HepG2 (cell line): ENCODE measurements at regions of chr1 and their contacts with region 1.

Region 1: DNA sequence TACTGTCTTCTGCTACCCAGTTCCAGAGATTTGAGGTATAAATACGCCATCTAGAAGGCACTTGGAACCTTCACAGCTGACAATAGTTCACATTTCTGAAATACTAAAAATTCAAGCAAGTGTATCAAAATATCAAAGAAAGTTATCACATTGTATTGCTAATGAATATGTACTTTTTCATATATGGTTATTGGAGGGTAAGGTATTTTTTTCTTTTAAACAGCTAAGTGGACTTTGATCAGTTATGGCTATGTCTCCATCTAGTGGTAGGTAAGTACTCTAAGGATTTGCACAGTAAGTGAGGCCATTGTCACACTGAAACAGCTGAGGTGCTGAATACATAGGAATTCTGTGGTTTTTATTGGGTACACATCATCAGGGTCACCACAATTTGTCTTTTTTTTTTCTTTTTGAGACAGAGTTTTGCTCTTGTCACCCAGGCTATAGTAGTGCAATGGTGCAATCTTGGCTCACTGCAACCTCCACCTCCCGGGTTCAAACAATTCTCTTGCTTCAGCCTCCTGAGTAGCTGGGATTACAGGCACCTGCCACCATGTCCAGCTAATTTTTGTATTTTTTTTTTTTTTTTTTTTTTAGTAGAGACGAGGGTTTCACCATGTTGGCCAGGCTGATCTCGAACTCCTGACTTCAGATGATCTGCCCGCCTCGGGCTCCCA is 49.1 kb upstream of the CR2 start:
- DNase-seq: peak; percentile 81
- ATAC-seq: peak; percentile 90
- H3K4me3 ChIP-seq: no peak overlapping the region
- H3K27ac ChIP-seq: no peak overlapping the region
- H3K4me1 ChIP-seq: no peaks in the 10 kb centered on the region
- H3K27me3 ChIP-seq: no peaks in the 10 kb centered on the region
- CTCF ChIP-seq: peak; percentile 82
- EP300 ChIP-seq: no peak
- POLR2A ChIP-seq: no peak
- RAD21 ChIP-seq: peak; percentile 69

Region 2: DNA sequence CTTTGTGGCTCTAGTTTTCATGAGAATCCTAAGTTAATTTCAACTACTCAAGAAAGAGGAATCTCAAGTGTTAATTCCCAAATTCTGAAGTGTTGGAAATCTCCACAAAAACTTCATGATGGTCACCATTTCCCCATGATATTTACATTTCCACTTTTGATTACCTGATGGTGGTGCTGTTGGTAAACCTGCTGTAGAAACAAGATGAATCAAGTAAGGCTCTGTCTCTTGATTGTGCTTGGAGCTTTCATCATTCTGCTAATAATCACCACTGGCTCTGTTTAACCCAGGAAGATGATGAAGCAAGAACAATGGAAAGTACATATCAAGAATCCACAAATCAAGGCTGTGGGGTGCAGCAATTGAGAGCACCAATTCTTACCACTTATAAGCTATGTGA is 223.1 kb before region 1 on chr1:
- CTCF ChIA-PET with region 1: no interaction called
- POLR2A ChIA-PET with region 1: no interaction called
- in situ Hi-C with region 1: no loop called
- intact Hi-C with region 1: loop called (anchors 1 kb)
- DNase-seq: no peak
- ATAC-seq: no peak
- H3K4me3 ChIP-seq: no peak overlapping the region
- H3K27ac ChIP-seq: no peak overlapping the region
- H3K4me1 ChIP-seq: no peaks in the 10 kb centered on the region
- H3K27me3 ChIP-seq: no peaks in the 10 kb centered on the region
- CTCF ChIP-seq: peak; percentile 55
- EP300 ChIP-seq: no peak
- POLR2A ChIP-seq: no peak
- RAD21 ChIP-seq: no peak

Region 3: GRCh38 chr1:207259391-207259790 is 145.6 kb before region 1 on chr1:
- CTCF ChIA-PET with region 1: interaction called, 10 read pairs
- POLR2A ChIA-PET with region 1: no interaction called
- in situ Hi-C with region 1: no loop called
- intact Hi-C with region 1: loop called (anchors 1 kb)
- DNase-seq: peak; percentile 23
- ATAC-seq: peak; percentile 72
- H3K4me3 ChIP-seq: no peak overlapping the region
- H3K27ac ChIP-seq: no peak overlapping the region
- H3K4me1 ChIP-seq: no peaks in the 10 kb centered on the region
- H3K27me3 ChIP-seq: no peaks in the 10 kb centered on the region
- CTCF ChIP-seq: peak; percentile 53
- EP300 ChIP-seq: no peak
- POLR2A ChIP-seq: no peak
- RAD21 ChIP-seq: 0 out of 2 replicates have a peak, but pooled peaks have one; percentile 29

Region 4: GRCh38 chr1:207474210-207474609 is 69.2 kb after region 1 on chr1:
- CTCF ChIA-PET with region 1: no interaction called
- POLR2A ChIA-PET with region 1: no interaction called
- in situ Hi-C with region 1: no loop called
- intact Hi-C with region 1: no loop called
- DNase-seq: no peak
- ATAC-seq: no peak
- H3K4me3 ChIP-seq: no peak overlapping the region
- H3K27ac ChIP-seq: no peak overlapping the region
- H3K4me1 ChIP-seq: no peaks in the 10 kb centered on the region
- H3K27me3 ChIP-seq: peaks cover 0 to 5% of the 10 kb centered on the region in 2 experiments; a peak in 2 of 5 replicates
- CTCF ChIP-seq: no peak
- EP300 ChIP-seq: no peak
- POLR2A ChIP-seq: no peak
- RAD21 ChIP-seq: no peak

Region 5: DNA sequence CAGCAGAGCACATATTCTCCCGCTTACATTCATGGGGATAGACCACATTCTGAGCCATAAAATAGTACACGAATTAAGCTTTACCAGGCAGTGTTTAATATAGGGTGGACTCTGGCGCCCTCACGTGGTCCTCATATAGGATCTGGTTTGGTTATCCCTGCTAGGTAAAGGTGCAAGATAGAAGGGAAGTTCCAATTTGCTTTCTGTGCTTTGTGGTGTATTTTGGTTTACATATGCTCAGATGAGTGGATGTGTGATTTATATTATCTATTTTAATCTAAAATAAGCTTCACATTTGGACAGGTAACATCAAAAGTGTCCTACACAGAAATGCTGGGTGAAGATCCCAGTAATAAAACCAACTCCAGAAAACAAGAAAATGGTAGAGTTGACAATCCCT is 94.6 kb after region 1 on chr1:
- CTCF ChIA-PET with region 1: no interaction called
- POLR2A ChIA-PET with region 1: no interaction called
- in situ Hi-C with region 1: no loop called
- intact Hi-C with region 1: loop called (anchors 5 kb)
- DNase-seq: peak; percentile 47
- ATAC-seq: peak; percentile 80
- H3K4me3 ChIP-seq: no peak overlapping the region
- H3K27ac ChIP-seq: no peak overlapping the region
- H3K4me1 ChIP-seq: no peaks in the 10 kb centered on the region
- H3K27me3 ChIP-seq: peaks cover 4 to 31% of the 10 kb centered on the region in 2 experiments; a peak in 3 of 5 replicates
- CTCF ChIP-seq: peak; percentile 83
- EP300 ChIP-seq: no peak
- POLR2A ChIP-seq: no peak
- RAD21 ChIP-seq: peak; percentile 43; the same call in 1 of the 2 replicates